CD4-positive, alpha-beta T cell (primary cell): ENCODE measurements at regions of chr19 and their contacts with region 1.

Region 1: GRCh38 chr19:3821857-3822364 is 35.7 kb upstream of the MATK start:
- DNase-seq: peak; percentile 70 to 95 (median 89)
- ATAC-seq: peak; percentile 96
- H3K4me3 ChIP-seq: no peak overlapping the region
- H3K4me3 Mint-ChIP-seq: peak overlapping the region; percentile 27
- H3K27ac ChIP-seq: no peak overlapping the region
- H3K27ac Mint-ChIP-seq: no peak overlapping the region
- H3K4me1 ChIP-seq: peaks cover 39% of the 10 kb centered on the region
- H3K4me1 Mint-ChIP-seq: peaks cover 23% of the 10 kb centered on the region
- H3K27me3 ChIP-seq: no peaks in the 10 kb centered on the region
- H3K27me3 Mint-ChIP-seq: no peaks in the 10 kb centered on the region
- CTCF ChIP-seq: peak; percentile 99

Region 2: GRCh38 chr19:2355168-2356035 is 1466.5 kb before region 1 on chr19:
- CTCF ChIA-PET with region 1: no interaction called
- POLR2A ChIA-PET with region 1: no interaction called
- intact Hi-C with region 1: no loop called
- DNase-seq: no peak
- ATAC-seq: no peak
- H3K4me3 ChIP-seq: no peak overlapping the region
- H3K4me3 Mint-ChIP-seq: no peak overlapping the region
- H3K27ac ChIP-seq: no peak overlapping the region
- H3K27ac Mint-ChIP-seq: no peak overlapping the region
- H3K4me1 ChIP-seq: peaks cover 3% of the 10 kb centered on the region
- H3K4me1 Mint-ChIP-seq: peaks cover 1% of the 10 kb centered on the region
- H3K27me3 ChIP-seq: peaks cover 0 to 8% of the 10 kb centered on the region in 2 experiments
- H3K27me3 Mint-ChIP-seq: peaks cover 2% of the 10 kb centered on the region
- CTCF ChIP-seq: no peak

Region 3: DNA sequence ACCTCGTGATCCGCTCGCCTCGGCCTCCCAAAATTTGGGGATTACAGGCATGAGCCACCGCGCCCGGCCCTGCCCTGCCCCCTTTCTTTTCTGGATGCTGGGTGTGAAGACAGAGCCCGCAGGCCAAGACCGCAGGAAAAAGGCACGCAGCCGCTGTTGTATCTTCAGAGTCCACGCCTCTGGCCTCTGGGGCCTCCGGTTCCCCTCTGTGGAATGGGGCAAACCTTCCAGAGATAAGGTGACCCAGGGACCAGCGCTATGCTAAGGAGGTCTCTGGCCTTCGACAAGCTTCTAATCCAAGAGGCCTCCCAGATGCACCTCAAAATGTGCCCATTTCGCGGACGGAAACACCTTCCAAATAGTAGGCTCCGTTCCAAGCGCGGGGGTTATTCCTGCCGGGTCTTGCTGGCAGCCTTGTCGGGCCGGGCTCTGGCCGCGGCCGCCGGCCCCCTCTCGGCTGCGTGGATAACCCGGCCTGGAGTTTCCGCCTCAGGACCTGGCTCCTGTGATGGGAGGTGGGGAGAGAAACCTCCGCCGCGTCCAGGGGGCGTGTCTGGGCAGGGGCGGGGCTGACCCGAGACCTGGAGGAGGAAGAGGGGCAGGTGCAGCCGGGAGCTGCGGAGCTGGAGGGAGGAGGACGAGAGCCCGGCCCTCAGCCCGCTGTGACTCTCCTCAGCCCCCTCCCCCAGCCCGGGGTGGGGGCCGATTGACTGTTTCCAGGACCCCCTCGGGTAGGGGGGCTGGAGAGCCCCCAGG is 100.6 kb before region 1 on chr19:
- CTCF ChIA-PET with region 1: interaction called, 4 read pairs
- POLR2A ChIA-PET with region 1: interaction called, 3 read pairs
- intact Hi-C with region 1: loop called in 1 of 2 experiments (anchors 1 kb)
- DNase-seq: peak; percentile 82 to 94 (median 88)
- ATAC-seq: peak; percentile 96
- H3K4me3 ChIP-seq: peak overlapping the region; percentile 62
- H3K4me3 Mint-ChIP-seq: peak overlapping the region; percentile 82
- H3K27ac ChIP-seq: no peak overlapping the region
- H3K27ac Mint-ChIP-seq: no peak overlapping the region
- H3K4me1 ChIP-seq: peaks cover 33% of the 10 kb centered on the region
- H3K4me1 Mint-ChIP-seq: peaks cover 4% of the 10 kb centered on the region
- H3K27me3 ChIP-seq: peaks cover 14 to 15% of the 10 kb centered on the region in 2 experiments
- H3K27me3 Mint-ChIP-seq: peaks cover 8% of the 10 kb centered on the region
- CTCF ChIP-seq: no peak

Region 4: GRCh38 chr19:3783660-3784584 is 38.0 kb before region 1 on chr19:
- CTCF ChIA-PET with region 1: interaction called, 5 read pairs
- POLR2A ChIA-PET with region 1: no interaction called
- intact Hi-C with region 1: loop called (anchors 1 to 5 kb)
- DNase-seq: peak in 7 of 14 experiments; percentile 18 to 67 (median 36)
- ATAC-seq: peak; percentile 68
- H3K4me3 ChIP-seq: no peak overlapping the region
- H3K4me3 Mint-ChIP-seq: peak overlapping the region; percentile 86
- H3K27ac ChIP-seq: no peak overlapping the region
- H3K27ac Mint-ChIP-seq: no peak overlapping the region
- H3K4me1 ChIP-seq: peaks cover 18% of the 10 kb centered on the region
- H3K4me1 Mint-ChIP-seq: peaks cover 8% of the 10 kb centered on the region
- H3K27me3 ChIP-seq: no peaks in the 10 kb centered on the region
- H3K27me3 Mint-ChIP-seq: no peaks in the 10 kb centered on the region
- CTCF ChIP-seq: peak; percentile 12

Region 5: GRCh38 chr19:3809881-3810707 is 11.8 kb before region 1 on chr19:
- CTCF ChIA-PET with region 1: interaction called, 12 read pairs
- POLR2A ChIA-PET with region 1: interaction called, 15 read pairs
- intact Hi-C with region 1: no loop called
- DNase-seq: no peak
- ATAC-seq: no peak
- H3K4me3 ChIP-seq: no peak overlapping the region
- H3K4me3 Mint-ChIP-seq: no peak overlapping the region
- H3K27ac ChIP-seq: peak overlapping the region in 1 of 2 donors; percentile 13
- H3K27ac Mint-ChIP-seq: peak overlapping the region; percentile 7
- H3K4me1 ChIP-seq: peaks cover 47% of the 10 kb centered on the region
- H3K4me1 Mint-ChIP-seq: peaks cover 31% of the 10 kb centered on the region
- H3K27me3 ChIP-seq: no peaks in the 10 kb centered on the region
- H3K27me3 Mint-ChIP-seq: no peaks in the 10 kb centered on the region
- CTCF ChIP-seq: no peak

Region 6: GRCh38 chr19:3923912-3924311 is 102.0 kb after region 1 on chr19:
- CTCF ChIA-PET with region 1: no interaction called
- POLR2A ChIA-PET with region 1: no interaction called
- intact Hi-C with region 1: no loop called
- DNase-seq: no peak
- ATAC-seq: no peak
- H3K4me3 ChIP-seq: no peak overlapping the region
- H3K4me3 Mint-ChIP-seq: no peak overlapping the region
- H3K27ac ChIP-seq: no peak overlapping the region
- H3K27ac Mint-ChIP-seq: no peak overlapping the region
- H3K4me1 ChIP-seq: no peaks in the 10 kb centered on the region
- H3K4me1 Mint-ChIP-seq: no peaks in the 10 kb centered on the region
- H3K27me3 ChIP-seq: no peaks in the 10 kb centered on the region
- H3K27me3 Mint-ChIP-seq: no peaks in the 10 kb centered on the region
- CTCF ChIP-seq: no peak